Activated T-helper 1 cell treated with anti-CD3 and anti-CD28 coated beads, Interleukin-12 subunit alpha, Interleukin-12 subunit beta, Interleukin-2, Interleukin-4 antibody, amounts not matched to agents 30 ng/mL and 10 ng/mL and 1 ng/mL, durations not matched to agents 14 hours and 24 hours and 36 hours (primary cell): ENCODE measurements at regions of chr2 and their contacts with region 1.

Region 1: DNA sequence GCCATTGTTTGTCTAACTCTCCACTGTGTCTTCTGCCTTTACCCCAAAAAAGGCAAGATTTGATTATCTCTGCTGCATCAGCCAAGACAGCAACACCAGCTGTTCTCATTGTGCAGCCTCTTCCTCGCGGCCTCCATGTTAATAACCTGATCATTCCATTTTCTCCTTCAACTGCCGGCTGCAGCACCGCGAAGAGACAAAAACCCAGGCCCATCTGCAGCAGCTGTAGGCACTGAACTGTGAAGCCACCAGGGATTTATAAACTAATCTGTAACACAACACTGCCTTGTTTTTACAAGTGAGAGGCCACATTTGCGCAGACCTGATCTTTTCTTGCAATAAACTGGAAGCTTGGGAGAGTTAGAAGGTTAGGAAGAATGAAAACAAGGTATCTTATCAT is 147.8 kb downstream of the SATB2 start:
- DNase-seq: no peak
- H3K4me3 Mint-ChIP-seq: no peak overlapping the region
- H3K27ac Mint-ChIP-seq: no peak overlapping the region
- H3K4me1 Mint-ChIP-seq: no peaks in the 10 kb centered on the region
- H3K27me3 Mint-ChIP-seq: no peaks in the 10 kb centered on the region

Region 2: DNA sequence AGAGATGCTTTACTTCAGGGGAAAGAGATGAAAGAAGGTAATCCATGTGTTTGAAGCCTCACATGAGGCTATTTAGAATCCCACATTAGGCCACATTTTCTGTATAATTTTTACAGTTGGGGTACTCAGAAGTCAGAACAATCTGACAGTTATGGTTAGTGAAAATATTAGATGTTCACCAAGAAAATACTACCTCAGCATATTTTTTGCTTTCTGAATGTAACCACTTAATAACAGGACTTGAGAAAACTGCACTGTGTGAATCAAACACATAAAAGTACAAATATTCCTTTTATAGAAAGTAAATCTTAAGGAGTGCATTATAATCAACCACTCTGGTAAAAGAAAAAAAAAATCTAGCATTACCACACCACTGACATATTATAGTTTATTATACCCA is 21.5 kb before region 1 on chr2:
- intact Hi-C with region 1: loop called (anchors 1 kb)
- DNase-seq: no peak
- H3K4me3 Mint-ChIP-seq: no peak overlapping the region
- H3K27ac Mint-ChIP-seq: no peak overlapping the region
- H3K4me1 Mint-ChIP-seq: no peaks in the 10 kb centered on the region
- H3K27me3 Mint-ChIP-seq: no peaks in the 10 kb centered on the region